ENCODE measurements at regions of chr10 and their contacts with region 1.

Region 1: DNA sequence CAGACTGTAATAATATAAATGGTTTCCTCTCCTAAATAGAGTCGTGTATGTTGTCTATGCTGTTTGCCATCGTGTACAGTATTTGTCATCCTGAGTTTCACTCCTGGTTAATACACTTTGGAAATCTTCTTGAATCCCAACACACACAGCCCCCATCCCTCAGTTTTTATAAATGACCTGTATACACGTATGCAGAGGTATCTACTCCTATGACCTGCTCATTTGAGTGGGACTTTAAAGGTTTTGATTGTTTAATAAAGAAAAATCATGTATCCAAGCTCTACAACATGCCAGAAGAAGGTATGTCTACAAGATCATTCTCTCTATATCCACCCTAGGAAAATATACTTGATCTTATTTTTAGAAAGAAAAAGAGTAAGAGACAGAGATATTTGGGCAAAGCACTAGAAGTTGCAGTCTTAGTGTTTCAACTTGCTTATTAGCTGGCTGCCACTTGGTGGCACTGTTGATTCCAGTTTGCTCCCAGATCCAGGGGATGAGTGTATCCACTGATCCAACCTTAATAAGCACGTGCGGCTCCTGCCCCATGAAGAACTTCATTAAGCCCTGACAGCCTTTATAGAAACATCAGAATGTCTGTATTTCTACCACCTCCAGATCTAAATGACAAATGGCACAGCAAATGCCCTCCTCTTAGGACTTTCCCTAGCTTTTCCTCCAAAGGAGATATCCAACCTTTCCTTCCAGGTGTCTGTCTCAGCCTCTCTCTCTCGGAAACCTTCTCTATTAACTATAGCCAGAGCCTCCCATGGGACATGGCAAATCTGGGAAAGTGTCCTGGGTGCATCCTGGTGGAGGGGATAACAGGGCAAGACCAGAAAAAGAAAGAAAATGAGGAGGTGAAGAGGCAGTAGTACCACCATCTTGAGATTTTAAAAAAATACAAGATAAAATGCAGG is 181.6 kb upstream of the NEBL start:
- DNase-seq: peak; percentile 77
- ATAC-seq: peak; percentile 75
- H3K4me3 ChIP-seq: no peak overlapping the region
- H3K27ac ChIP-seq: no peak overlapping the region
- H3K4me1 ChIP-seq: peaks cover 18% of the 10 kb centered on the region
- H3K27me3 ChIP-seq: no peaks in the 10 kb centered on the region
- CTCF ChIP-seq: peak; percentile 82

Region 2: DNA sequence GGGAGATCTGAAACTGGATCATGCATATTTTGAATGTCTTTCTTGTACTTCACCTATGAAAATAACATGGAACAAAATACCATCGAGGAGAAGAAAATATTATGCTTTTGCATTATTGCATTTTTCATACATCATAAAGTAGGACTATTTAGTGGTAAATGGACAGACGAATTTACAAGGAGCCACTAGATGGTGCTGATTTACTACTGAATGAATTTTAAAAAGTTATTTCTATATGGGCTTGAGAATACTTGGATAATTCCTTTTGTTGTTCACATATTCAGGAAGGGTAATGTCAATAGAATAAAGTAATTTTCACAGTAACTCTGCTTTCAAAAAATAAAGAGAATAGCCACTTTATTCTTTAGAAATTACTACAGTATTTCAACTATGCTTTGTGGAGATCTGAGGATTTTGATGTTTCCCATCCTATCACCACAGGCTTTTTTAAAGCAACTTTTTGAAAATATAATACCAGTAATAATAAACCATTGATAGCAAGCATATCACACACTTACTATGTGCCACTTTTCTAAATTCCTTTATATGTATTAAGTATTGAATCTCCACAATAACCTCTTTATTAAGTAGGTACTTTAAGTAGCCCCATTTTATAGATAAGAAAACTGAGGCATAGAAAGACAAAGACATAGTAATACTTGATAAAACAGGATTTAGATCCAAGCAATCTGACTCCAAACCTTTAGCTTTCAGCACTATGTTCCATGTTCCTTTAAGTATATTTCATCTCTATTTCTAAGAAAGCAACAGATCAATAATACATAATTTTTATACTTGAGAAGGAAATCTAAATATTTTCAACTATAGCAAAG is 220.2 kb before region 1 on chr10:
- CTCF ChIA-PET with region 1: no interaction called
- POLR2A ChIA-PET with region 1: no interaction called
- intact Hi-C with region 1: loop called (anchors 2 kb)
- DNase-seq: peak; percentile 53
- ATAC-seq: peak; percentile 51; the same call in 1 of the 2 replicates
- H3K4me3 ChIP-seq: no peak overlapping the region
- H3K27ac ChIP-seq: no peak overlapping the region
- H3K4me1 ChIP-seq: no peaks in the 10 kb centered on the region
- H3K27me3 ChIP-seq: no peaks in the 10 kb centered on the region
- CTCF ChIP-seq: peak; percentile 74

Region 3: GRCh38 chr10:20901110-20901509 is 177.6 kb before region 1 on chr10:
- CTCF ChIA-PET with region 1: no interaction called
- POLR2A ChIA-PET with region 1: no interaction called
- intact Hi-C with region 1: no loop called
- DNase-seq: no peak
- ATAC-seq: no peak
- H3K4me3 ChIP-seq: no peak overlapping the region
- H3K27ac ChIP-seq: no peak overlapping the region
- H3K4me1 ChIP-seq: 0 out of 2 replicates have a peak, but pooled peaks cover 5% of the 10 kb centered on the region
- H3K27me3 ChIP-seq: no peaks in the 10 kb centered on the region
- CTCF ChIP-seq: no peak

Region 4: GRCh38 chr10:20936396-20936795 is 142.3 kb before region 1 on chr10:
- CTCF ChIA-PET with region 1: no interaction called
- POLR2A ChIA-PET with region 1: no interaction called
- intact Hi-C with region 1: loop called (anchors 10 kb)
- DNase-seq: no peak
- ATAC-seq: peak; percentile 49
- H3K4me3 ChIP-seq: no peak overlapping the region
- H3K27ac ChIP-seq: peak overlapping the region; percentile 81
- H3K4me1 ChIP-seq: peaks cover 19% of the 10 kb centered on the region
- H3K27me3 ChIP-seq: no peaks in the 10 kb centered on the region
- CTCF ChIP-seq: no peak

Region 5: GRCh38 chr10:21039721-21040120 is 38.9 kb before region 1 on chr10:
- CTCF ChIA-PET with region 1: no interaction called
- POLR2A ChIA-PET with region 1: no interaction called
- intact Hi-C with region 1: no loop called
- DNase-seq: no peak
- ATAC-seq: no peak
- H3K4me3 ChIP-seq: no peak overlapping the region
- H3K27ac ChIP-seq: no peak overlapping the region
- H3K4me1 ChIP-seq: no peaks in the 10 kb centered on the region
- H3K27me3 ChIP-seq: no peaks in the 10 kb centered on the region
- CTCF ChIP-seq: no peak

Region 6: GRCh38 chr10:21184984-21185383 is 106.3 kb after region 1 on chr10:
- CTCF ChIA-PET with region 1: interaction called, 24 read pairs
- POLR2A ChIA-PET with region 1: no interaction called
- intact Hi-C with region 1: no loop called
- DNase-seq: no peak
- ATAC-seq: no peak
- H3K4me3 ChIP-seq: no peak overlapping the region
- H3K27ac ChIP-seq: peak overlapping the region; percentile 24; the same call in 1 of the 2 replicates
- H3K4me1 ChIP-seq: peaks cover 17% of the 10 kb centered on the region
- H3K27me3 ChIP-seq: no peaks in the 10 kb centered on the region
- CTCF ChIP-seq: no peak

Region 7: GRCh38 chr10:21273400-21273932 is 194.8 kb after region 1 on chr10:
- CTCF ChIA-PET with region 1: no interaction called
- POLR2A ChIA-PET with region 1: no interaction called
- intact Hi-C with region 1: loop called (anchors 1 kb)
- DNase-seq: peak; percentile 38
- ATAC-seq: peak; percentile 59
- H3K4me3 ChIP-seq: no peak overlapping the region
- H3K27ac ChIP-seq: peak overlapping the region; percentile 75
- H3K4me1 ChIP-seq: peaks cover 19% of the 10 kb centered on the region
- H3K27me3 ChIP-seq: no peaks in the 10 kb centered on the region
- CTCF ChIP-seq: no peak

Region 8: GRCh38 chr10:22029445-22030236 is 951.0 kb after region 1 on chr10:
- CTCF ChIA-PET with region 1: no interaction called
- POLR2A ChIA-PET with region 1: no interaction called
- intact Hi-C with region 1: no loop called
- DNase-seq: no peak
- ATAC-seq: no peak
- H3K4me3 ChIP-seq: no peak overlapping the region
- H3K27ac ChIP-seq: no peak overlapping the region
- H3K4me1 ChIP-seq: peaks cover 8% of the 10 kb centered on the region
- H3K27me3 ChIP-seq: no peaks in the 10 kb centered on the region
- CTCF ChIP-seq: no peak